ENCODE measurements at regions of chr10 and their contacts with region 1.

Region 1: GRCh38 chr10:25016376-25017154 is at the start of gene THNSL1:
- DNase-seq: peak; percentile 99
- ATAC-seq: peak; percentile 99
- H3K4me3 ChIP-seq: peak within 1 kb of the TSS; percentile 79
- H3K27ac ChIP-seq: peak within 1 kb of the TSS; percentile 77
- H3K4me1 ChIP-seq: peaks cover 1% of the 10 kb centered on the region; the same call in 1 of the 2 replicates
- H3K27me3 ChIP-seq: no peaks in the 10 kb centered on the region
- CTCF ChIP-seq: no peak
- POLR2A ChIP-seq: peak; percentile 84
- RAD21 ChIP-seq: no peak
- total RNA-seq, gene THNSL1: 2.0 and 3.6 TPM in 2 replicates

Region 2: DNA sequence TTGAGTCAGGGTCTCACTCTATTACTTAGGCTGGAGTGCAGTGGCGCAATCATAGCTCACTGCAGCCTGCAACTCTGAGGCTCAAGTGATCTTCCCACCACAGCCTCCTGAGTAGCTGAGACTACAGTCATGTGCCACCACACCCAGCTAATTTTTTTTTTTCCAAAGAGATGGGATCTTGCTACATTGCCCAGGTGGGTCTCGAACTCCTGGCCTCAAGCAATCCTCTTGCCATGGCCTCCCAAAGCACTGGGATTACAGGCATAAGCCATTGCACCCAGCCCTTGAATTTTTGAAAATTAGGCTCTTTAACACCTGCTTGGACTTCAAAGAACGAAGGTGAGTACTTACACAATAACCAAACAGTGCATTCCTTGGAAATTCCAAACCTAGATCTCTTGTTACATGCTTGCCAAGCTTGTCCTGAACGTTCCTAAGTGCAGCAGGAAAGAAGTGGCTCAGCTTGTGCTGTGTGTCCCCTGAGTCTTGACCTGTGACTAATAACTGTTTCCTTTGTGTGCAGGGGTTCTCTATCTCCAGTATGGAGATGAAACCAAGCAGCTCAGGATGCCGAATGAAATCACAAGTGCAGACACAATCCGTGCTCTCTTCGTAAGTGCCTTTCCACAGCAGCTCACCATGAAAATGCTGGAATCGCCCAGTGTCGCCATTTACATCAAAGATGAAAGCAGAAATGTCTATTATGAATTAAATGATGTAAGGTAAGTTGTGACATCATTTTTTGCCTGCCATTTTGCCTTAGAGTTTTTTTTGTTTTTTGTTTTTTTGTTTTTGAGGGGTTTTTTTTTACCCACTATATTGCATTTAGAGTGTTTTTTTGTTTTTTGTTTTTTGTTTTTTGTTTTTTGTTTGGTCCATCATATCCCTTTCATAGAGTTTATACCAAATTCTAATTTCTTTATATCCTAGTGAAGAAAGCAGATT is 583.8 kb before region 1 on chr10:
- CTCF ChIA-PET with region 1: no interaction called
- POLR2A ChIA-PET with region 1: no interaction called
- dilution Hi-C with region 1: no loop called
- in situ Hi-C with region 1: no loop called
- intact Hi-C with region 1: no loop called
- DNase-seq: peak; percentile 24
- ATAC-seq: no peak
- H3K4me3 ChIP-seq: no peak overlapping the region
- H3K27ac ChIP-seq: no peak overlapping the region
- H3K4me1 ChIP-seq: peaks cover 3% of the 10 kb centered on the region; the same call in 1 of the 2 replicates
- H3K27me3 ChIP-seq: no peaks in the 10 kb centered on the region
- CTCF ChIP-seq: no peak
- POLR2A ChIP-seq: no peak
- RAD21 ChIP-seq: no peak

Region 3: DNA sequence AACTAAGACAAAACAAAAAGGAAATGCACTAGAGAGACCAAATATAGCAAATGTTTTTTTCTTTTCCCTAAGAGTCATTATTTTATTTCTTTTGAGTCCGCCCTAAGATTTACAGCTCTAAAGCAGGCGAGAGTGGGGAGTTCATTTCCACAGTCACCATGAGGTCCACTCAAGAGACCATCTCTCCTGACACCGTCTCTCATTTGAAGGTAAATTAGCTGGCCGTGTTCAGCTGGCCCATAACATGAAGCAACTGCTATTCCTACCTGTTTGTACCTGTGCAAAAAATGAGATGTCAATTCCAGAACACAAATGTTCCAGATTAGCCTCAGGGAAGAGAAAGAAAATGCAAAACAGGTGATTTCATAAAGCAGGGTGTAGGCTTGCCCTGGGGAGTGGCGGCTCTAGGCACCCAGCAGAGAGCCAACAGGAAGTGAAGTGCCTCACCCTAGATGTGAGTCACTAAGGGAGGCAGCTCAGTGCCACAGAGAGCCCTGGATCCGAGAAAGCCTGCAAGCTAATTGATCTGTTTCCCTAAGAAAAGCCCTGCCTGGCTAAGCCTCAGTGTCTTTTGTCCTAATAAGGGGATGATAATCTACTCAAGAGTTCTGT is 533.0 kb before region 1 on chr10:
- CTCF ChIA-PET with region 1: no interaction called
- POLR2A ChIA-PET with region 1: no interaction called
- dilution Hi-C with region 1: no loop called
- in situ Hi-C with region 1: no loop called
- intact Hi-C with region 1: no loop called
- DNase-seq: peak; percentile 28
- ATAC-seq: peak; percentile 49; the same call in 1 of the 2 replicates
- H3K4me3 ChIP-seq: no peak overlapping the region
- H3K27ac ChIP-seq: no peak overlapping the region
- H3K4me1 ChIP-seq: peaks cover 4% of the 10 kb centered on the region
- H3K27me3 ChIP-seq: no peaks in the 10 kb centered on the region
- CTCF ChIP-seq: no peak
- POLR2A ChIP-seq: no peak
- RAD21 ChIP-seq: no peak

Region 4: GRCh38 chr10:24958091-24958720 is 58.4 kb before region 1 on chr10:
- CTCF ChIA-PET with region 1: no interaction called
- POLR2A ChIA-PET with region 1: no interaction called
- dilution Hi-C with region 1: no loop called
- in situ Hi-C with region 1: no loop called
- intact Hi-C with region 1: loop called (anchors 2 kb)
- DNase-seq: peak; percentile 95
- ATAC-seq: peak; percentile 67
- H3K4me3 ChIP-seq: no peak overlapping the region
- H3K27ac ChIP-seq: peak overlapping the region; percentile 71; the same call in 1 of the 2 replicates
- H3K4me1 ChIP-seq: peaks cover 22% of the 10 kb centered on the region
- H3K27me3 ChIP-seq: no peaks in the 10 kb centered on the region
- CTCF ChIP-seq: no peak
- POLR2A ChIP-seq: no peak
- RAD21 ChIP-seq: no peak; the same call in 1 of the 2 replicates

Region 5: GRCh38 chr10:25157650-25158049 is 141.1 kb after region 1 on chr10:
- CTCF ChIA-PET with region 1: no interaction called
- POLR2A ChIA-PET with region 1: no interaction called
- dilution Hi-C with region 1: no loop called
- in situ Hi-C with region 1: no loop called
- intact Hi-C with region 1: no loop called
- DNase-seq: no peak
- ATAC-seq: no peak
- H3K4me3 ChIP-seq: no peak overlapping the region
- H3K27ac ChIP-seq: no peak overlapping the region
- H3K4me1 ChIP-seq: no peaks in the 10 kb centered on the region
- H3K27me3 ChIP-seq: no peaks in the 10 kb centered on the region
- CTCF ChIP-seq: no peak
- POLR2A ChIP-seq: no peak
- RAD21 ChIP-seq: no peak